Breast epithelium (tissue), 4 donors: ENCODE measurements at regions of chr4 and their contacts with region 1.

Region 1: DNA sequence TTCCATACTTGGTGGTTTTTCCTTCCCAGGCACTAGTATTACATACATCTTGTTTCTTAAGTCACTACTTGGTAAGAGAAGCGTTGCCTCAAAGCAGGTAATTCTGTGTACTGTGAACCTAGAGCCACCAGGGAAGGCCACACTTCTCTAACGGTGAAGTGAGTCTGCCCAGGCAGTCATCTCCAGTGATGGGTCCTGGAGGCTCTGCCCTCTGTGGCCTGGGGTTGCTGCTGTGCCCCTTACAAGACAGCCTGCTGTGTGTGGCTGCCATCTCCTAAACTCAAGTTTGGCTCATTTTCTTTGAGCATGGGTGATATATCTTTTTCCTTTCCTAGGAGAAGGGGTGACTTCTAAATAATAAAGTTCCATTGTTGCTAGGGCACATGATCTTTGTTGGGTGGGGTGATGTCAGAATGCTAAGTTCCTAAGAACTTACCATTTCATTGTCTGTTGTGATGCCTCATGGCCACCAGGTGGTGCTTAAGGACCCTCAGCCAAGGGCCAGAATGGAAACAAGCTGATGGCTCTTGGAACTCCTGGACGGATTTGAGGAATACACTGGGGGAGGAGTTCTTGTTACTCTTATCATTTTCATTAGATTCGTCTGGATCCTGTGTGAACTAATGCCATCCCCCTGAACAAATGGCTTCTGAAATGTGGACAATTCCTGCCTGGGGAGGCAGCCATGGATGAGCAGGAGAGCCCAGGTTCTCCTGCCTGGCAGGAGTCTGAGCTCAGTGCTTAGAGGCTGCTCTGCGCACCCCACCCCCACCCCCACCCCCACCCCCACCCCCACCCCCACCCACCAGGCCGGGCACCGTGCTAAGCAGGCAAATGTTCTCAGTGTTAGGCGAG is 41.1 kb upstream of the WDR1 start:
- DNase-seq: peak in 1 of 2 donors; percentile 57
- H3K4me3 ChIP-seq: peak overlapping the region in 1 of 3 donors; percentile 39
- H3K27ac ChIP-seq: peak overlapping the region; percentile 49 to 66
- H3K4me1 ChIP-seq: peaks cover 0 to 4% of the 10 kb centered on the region in 2 donors
- H3K27me3 ChIP-seq: no peaks in the 10 kb centered on the region
- CTCF ChIP-seq: peak; percentile 78 to 85 (median 81)
- POLR2A ChIP-seq: no peak

Region 2: DNA sequence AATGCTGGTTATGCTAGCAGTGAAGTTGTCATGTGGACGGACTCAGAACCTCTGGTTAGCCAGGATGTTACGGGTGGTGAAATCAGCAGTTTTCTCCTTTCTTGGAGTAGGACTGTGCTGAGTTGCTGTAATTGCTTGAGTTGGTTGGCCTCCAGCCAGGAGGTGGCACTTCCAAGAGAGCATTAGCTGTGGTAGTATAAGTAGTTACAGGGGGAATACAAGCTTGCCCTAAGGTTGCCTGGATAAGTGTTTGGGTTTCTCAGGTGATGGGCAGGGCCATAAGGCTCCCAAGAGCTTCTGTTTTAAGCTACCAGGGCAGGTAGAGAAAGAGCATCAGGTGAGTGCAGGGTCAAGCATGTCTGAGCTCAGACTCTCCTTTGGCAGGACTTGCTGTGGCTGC is 196.5 kb after region 1 on chr4:
- intact Hi-C with region 1: no loop called
- DNase-seq: no peak
- H3K4me3 ChIP-seq: no peak overlapping the region
- H3K27ac ChIP-seq: no peak overlapping the region
- H3K4me1 ChIP-seq: no peaks in the 10 kb centered on the region
- H3K27me3 ChIP-seq: no peaks in the 10 kb centered on the region
- CTCF ChIP-seq: no peak
- POLR2A ChIP-seq: no peak

Region 3: GRCh38 chr4:10554694-10555093 is 397.0 kb after region 1 on chr4:
- intact Hi-C with region 1: loop called (anchors 10 kb)
- DNase-seq: peak in 1 of 2 donors; percentile 22
- H3K4me3 ChIP-seq: no peak overlapping the region
- H3K27ac ChIP-seq: no peak overlapping the region
- H3K4me1 ChIP-seq: no peaks in the 10 kb centered on the region
- H3K27me3 ChIP-seq: no peaks in the 10 kb centered on the region
- CTCF ChIP-seq: peak; percentile 27 to 65 (median 51)
- POLR2A ChIP-seq: no peak